Common myeloid progenitor, CD34-positive (primary cell): ENCODE measurements at regions of chr5 and their contacts with region 1.

Region 1: GRCh38 chr5:159444441-159445082 is 114.3 kb upstream of the IL12B start:
- DNase-seq: peak; percentile 53 to 72 (median 68)
- H3K4me3 ChIP-seq: no peak overlapping the region
- H3K27ac ChIP-seq: no peak overlapping the region
- H3K4me1 ChIP-seq: no peaks in the 10 kb centered on the region
- H3K27me3 ChIP-seq: peaks cover 0 to 9% (median 0%) of the 10 kb centered on the region in 5 experiments

Region 2: DNA sequence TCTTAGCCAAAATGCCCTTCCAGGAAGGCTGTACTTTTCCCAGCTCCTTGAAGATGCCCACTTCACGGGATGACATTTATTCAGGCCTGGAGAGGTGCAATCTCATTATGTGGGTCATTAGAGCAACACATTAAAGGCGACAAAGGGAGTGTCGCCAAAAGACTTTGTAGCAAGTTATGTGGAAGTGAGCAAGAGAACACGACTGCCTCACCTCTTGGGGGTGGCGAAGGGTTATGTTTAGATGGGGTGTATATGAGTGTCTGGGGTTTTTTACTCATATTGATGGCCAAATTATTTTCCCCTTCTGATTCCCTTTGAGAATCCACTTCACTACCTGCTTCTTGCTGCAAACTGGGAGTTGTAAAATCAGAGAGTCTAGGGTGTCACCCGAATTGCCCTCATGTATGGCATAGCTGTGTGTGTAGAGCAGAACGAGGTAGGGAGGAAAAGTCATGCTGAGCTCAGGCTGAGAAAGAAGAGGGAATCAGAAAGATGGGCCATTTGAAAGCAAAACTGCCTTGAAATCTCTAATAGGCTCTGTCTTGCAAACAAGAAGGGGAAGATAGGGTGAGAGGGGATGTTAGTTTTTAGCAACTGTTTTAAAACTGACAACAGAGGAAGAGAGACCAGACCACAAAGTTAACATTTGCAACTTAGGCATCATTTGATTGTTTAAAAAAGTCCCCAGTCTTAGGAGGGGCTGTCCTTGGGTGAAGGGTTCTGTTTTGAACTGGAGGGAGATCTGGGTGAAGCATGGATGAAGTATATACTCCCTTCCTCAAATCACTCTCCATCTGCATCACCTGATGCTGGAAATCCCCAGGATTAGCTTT is 17.2 kb before region 1 on chr5:
- CTCF ChIA-PET with region 1: interaction called, 13 read pairs
- POLR2A ChIA-PET with region 1: no interaction called
- DNase-seq: peak in 2 of 3 donors; percentile 62 to 63
- H3K4me3 ChIP-seq: no peak overlapping the region
- H3K27ac ChIP-seq: no peak overlapping the region
- H3K4me1 ChIP-seq: peaks cover 2 to 13% (median 13%) of the 10 kb centered on the region in 4 experiments
- H3K27me3 ChIP-seq: no peaks in the 10 kb centered on the region

Region 3: DNA sequence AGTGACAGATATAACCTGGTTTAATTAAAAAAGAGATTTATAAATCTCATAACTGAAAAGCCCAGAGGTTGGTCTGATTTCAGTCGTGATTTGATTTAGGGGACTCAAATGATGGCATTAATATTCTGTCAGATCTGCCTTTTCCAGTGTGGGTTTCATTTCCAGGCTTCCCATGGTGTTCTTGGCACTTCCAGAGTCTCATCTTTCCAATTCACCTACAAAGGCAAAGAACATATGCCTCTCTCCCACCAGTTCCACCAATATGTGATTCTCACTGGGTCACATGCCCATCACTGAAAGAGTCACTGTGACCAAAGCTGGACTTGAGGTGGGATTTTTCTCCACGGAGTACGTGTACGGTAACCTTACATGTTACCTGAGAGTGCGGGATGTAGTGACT is 23.1 kb after region 1 on chr5:
- CTCF ChIA-PET with region 1: no interaction called
- POLR2A ChIA-PET with region 1: no interaction called
- DNase-seq: no peak
- H3K4me3 ChIP-seq: no peak overlapping the region
- H3K27ac ChIP-seq: no peak overlapping the region
- H3K4me1 ChIP-seq: peaks cover 0 to 4% (median 1%) of the 10 kb centered on the region in 4 experiments
- H3K27me3 ChIP-seq: peaks cover 0 to 62% (median 26%) of the 10 kb centered on the region in 5 experiments